Heart left ventricle (tissue), 16 donors: ENCODE measurements at regions of chr1 and their contacts with region 1.

Region 1: DNA sequence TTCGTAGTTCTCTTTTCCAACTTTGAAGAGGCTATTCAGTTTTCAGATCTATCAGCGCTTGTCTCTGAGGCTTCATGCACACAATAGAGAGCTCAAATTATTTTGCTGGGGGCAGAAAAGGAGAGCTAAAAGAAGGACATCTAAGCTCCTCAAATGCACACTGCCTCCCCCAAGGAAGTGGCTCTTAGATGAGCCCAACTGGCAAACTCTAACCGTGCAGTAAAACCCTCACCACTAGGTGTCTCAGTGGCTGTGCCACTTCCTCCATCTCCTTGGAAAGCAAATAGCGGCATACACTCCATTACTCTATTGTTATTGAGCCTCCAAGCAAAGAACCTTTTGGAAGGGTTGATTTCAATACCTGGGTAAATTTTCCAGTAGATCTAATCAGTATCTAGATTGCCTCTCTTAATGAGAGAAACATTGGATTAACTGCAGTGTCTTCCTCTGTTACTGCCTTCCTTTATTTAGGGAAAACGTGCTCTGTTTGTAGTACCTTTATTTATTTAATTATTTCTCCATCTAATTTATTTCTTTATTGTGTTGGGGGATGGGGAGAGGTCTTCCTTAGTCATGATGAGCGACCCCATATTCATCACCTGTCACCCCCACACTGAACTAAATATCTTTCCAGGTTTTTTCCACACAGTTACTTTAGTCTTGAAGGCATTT is 9.2 kb upstream of the SFPQ start:
- DNase-seq: peak in 4 of 5 donors; percentile 55 to 69 (median 61)
- ATAC-seq: peak in 3 of 4 donors; percentile 93 to 97 (median 95)
- H3K4me3 ChIP-seq: peak overlapping the region in 2 of 12 donors; percentile 6 to 19
- H3K27ac ChIP-seq: no peak overlapping the region
- H3K4me1 ChIP-seq: peaks cover 0 to 8% (median 0%) of the 10 kb centered on the region in 12 donors
- H3K27me3 ChIP-seq: no peaks in the 10 kb centered on the region
- CTCF ChIP-seq: peak; percentile 74 to 93 (median 82)
- POLR2A ChIP-seq: no peak

Region 2: GRCh38 chr1:35190784-35191183 is 11.4 kb before region 1 on chr1:
- intact Hi-C with region 1: no loop called
- DNase-seq: no peak
- ATAC-seq: no peak
- H3K4me3 ChIP-seq: peak overlapping the region; percentile 85 to 100 (median 99)
- H3K27ac ChIP-seq: peak overlapping the region in 4 of 12 donors; percentile 98 to 100 (median 100)
- H3K4me1 ChIP-seq: peaks cover 14 to 63% (median 55%) of the 10 kb centered on the region in 12 donors
- H3K27me3 ChIP-seq: no peaks in the 10 kb centered on the region
- CTCF ChIP-seq: no peak
- POLR2A ChIP-seq: no peak

Region 3: GRCh38 chr1:35268282-35269200 is 66.4 kb after region 1 on chr1 and contains the start of gene ZMYM4:
- intact Hi-C with region 1: loop called in 3 of 10 experiments (anchors 5 to 10 kb)
- DNase-seq: peak; percentile 93 to 97 (median 96)
- ATAC-seq: peak; percentile 96 to 99 (median 98)
- H3K4me3 ChIP-seq: peak within 1 kb of the TSS; percentile 72 to 97 (median 87)
- H3K27ac ChIP-seq: peak within 1 kb of the TSS; percentile 75 to 94 (median 88)
- H3K4me1 ChIP-seq: peaks cover 0 to 44% (median 15%) of the 10 kb centered on the region in 12 donors
- H3K27me3 ChIP-seq: no peaks in the 10 kb centered on the region
- CTCF ChIP-seq: peak in 4 of 12 donors; percentile 7 to 15 (median 10)
- POLR2A ChIP-seq: peak in 1 of 2 donors; percentile 46
- total RNA-seq, gene ZMYM4: 18.8 to 44.3 (median 36.1) TPM

Region 4: GRCh38 chr1:35287807-35288640 is 85.8 kb after region 1 on chr1:
- intact Hi-C with region 1: loop called in 4 of 10 experiments (anchors 5 to 10 kb)
- DNase-seq: no peak
- ATAC-seq: peak in 2 of 4 donors; percentile 38 to 74
- H3K4me3 ChIP-seq: no peak overlapping the region
- H3K27ac ChIP-seq: peak overlapping the region in 4 of 12 donors; percentile 2 to 39 (median 22)
- H3K4me1 ChIP-seq: peaks cover 0 to 30% (median 22%) of the 10 kb centered on the region in 12 donors
- H3K27me3 ChIP-seq: no peaks in the 10 kb centered on the region
- CTCF ChIP-seq: no peak
- POLR2A ChIP-seq: no peak

Region 5: GRCh38 chr1:35298464-35298863 is 96.3 kb after region 1 on chr1:
- intact Hi-C with region 1: loop called in 9 of 10 experiments (anchors 1 to 10 kb)
- DNase-seq: peak in 3 of 5 donors; percentile 23 to 31 (median 24)
- ATAC-seq: peak; percentile 62 to 84 (median 78)
- H3K4me3 ChIP-seq: no peak overlapping the region
- H3K27ac ChIP-seq: no peak overlapping the region
- H3K4me1 ChIP-seq: peaks cover 0 to 28% (median 17%) of the 10 kb centered on the region in 12 donors
- H3K27me3 ChIP-seq: no peaks in the 10 kb centered on the region
- CTCF ChIP-seq: peak in 11 of 12 donors; percentile 20 to 60 (median 45)
- POLR2A ChIP-seq: no peak

Region 6: DNA sequence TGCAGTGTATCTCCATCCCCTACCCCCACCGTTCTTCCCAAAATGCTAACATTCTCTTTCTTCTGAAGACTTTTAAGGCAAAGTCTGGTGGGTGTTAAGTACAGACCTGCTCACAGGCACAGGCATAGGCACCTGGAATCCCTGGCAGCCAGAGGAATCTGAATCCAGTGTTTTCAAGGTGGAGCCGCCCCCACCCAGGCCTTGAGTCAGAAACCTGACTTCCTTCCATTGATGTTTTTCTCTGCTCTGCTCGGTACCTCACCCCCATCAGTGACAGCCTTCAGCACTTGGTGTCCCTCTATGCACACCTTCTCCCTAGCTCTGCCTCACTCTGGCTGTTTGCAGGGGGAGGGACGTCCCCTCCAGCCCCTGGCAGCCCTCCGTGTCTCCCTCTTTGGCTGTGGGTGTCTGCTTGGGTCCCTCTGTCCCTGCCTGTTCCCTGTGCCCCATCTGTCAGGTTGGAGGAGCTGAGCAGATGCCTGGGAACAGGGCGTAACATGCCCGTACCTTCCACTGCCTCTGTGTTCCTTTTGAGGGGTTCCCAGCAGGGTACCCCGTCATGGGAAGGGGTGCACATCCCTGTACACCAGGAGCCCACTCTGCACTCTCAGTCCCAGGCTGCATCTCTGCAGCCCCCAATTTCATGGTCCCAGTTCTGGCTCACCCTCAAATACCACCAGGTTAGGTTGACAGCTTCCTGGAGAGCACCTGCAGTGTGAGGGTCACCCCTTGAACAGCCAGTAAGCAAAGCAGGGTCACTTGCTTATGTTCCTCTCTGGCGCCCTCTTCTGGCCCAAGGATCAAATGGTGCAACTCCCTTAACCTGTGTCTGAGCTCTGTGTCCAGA is 362.1 kb after region 1 on chr1:
- intact Hi-C with region 1: loop called in 5 of 10 experiments (anchors 5 to 10 kb)
- DNase-seq: peak; percentile 72 to 87 (median 78)
- ATAC-seq: peak in 3 of 4 donors; percentile 29 to 49 (median 43)
- H3K4me3 ChIP-seq: no peak overlapping the region
- H3K27ac ChIP-seq: no peak overlapping the region
- H3K4me1 ChIP-seq: peaks cover 0 to 28% (median 11%) of the 10 kb centered on the region in 12 donors
- H3K27me3 ChIP-seq: peaks cover 0 to 1% (median 0%) of the 10 kb centered on the region in 9 donors
- CTCF ChIP-seq: peak; percentile 59 to 85 (median 78)
- POLR2A ChIP-seq: no peak

Region 7: DNA sequence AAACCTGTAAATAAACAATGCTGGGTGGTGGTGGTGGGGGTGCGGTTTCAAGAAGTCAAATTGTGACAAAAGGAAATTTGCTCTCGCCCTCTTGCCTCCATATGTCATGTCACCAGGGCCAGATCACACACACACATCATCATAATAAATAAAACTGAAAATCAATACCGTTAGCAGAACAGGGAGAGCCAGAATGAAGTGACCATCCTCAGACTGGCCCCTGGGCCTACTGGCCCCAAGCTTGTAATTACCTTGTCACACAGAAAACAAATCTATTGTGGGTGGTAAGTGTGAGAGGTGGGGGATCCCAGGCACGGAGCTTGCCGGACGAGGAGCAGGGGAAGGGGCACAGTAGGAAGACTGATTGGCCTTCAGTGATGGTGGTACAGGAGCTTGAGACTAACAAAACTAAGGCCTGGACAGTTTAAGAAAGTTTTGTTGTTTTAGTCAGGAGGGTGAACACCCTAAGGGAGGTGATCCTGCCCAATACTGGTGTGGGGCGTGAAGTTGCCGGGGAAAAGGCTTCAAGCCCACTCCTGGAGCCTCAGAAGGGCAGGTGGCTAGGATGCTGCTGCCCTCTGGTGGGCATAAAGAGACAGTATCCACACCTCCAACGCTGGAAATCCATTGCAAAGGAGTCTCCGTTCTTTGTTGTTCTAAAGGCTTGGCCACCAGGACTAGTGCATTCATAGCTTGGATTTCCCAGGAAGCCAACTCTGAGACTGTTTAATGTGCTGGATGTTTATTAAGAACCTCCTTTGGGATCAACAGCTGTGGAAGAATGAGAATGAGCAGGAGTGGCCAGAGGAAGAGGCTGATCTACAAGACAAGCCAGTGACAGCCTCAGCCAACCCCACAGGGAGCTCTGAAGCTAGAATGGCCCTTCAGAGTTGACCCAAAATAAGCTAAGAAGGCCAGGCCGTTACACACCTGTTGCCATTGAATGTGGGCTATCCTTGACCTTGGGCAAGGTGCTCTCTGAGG is 524.6 kb after region 1 on chr1:
- intact Hi-C with region 1: loop called in 1 of 10 experiments (anchors 10 kb)
- DNase-seq: peak in 4 of 5 donors; percentile 36 to 56 (median 40)
- ATAC-seq: peak; percentile 77 to 92 (median 87)
- H3K4me3 ChIP-seq: no peak overlapping the region
- H3K27ac ChIP-seq: no peak overlapping the region
- H3K4me1 ChIP-seq: peaks cover 0 to 3% (median 0%) of the 10 kb centered on the region in 12 donors
- H3K27me3 ChIP-seq: no peaks in the 10 kb centered on the region
- CTCF ChIP-seq: peak; percentile 79 to 95 (median 85)
- POLR2A ChIP-seq: no peak